Right cardiac atrium (tissue), 5 donors: ENCODE measurements at regions of chrX and their contacts with region 1.

Region 1: GRCh38 chrX:150352581-150352980 is 10.5 kb upstream of the MAMLD1 start:
- DNase-seq: no peak
- ATAC-seq: no peak
- H3K4me3 ChIP-seq: no peak overlapping the region
- H3K27ac ChIP-seq: no peak overlapping the region
- H3K4me1 ChIP-seq: no peaks in the 10 kb centered on the region
- H3K27me3 ChIP-seq: no peaks in the 10 kb centered on the region

Region 2: DNA sequence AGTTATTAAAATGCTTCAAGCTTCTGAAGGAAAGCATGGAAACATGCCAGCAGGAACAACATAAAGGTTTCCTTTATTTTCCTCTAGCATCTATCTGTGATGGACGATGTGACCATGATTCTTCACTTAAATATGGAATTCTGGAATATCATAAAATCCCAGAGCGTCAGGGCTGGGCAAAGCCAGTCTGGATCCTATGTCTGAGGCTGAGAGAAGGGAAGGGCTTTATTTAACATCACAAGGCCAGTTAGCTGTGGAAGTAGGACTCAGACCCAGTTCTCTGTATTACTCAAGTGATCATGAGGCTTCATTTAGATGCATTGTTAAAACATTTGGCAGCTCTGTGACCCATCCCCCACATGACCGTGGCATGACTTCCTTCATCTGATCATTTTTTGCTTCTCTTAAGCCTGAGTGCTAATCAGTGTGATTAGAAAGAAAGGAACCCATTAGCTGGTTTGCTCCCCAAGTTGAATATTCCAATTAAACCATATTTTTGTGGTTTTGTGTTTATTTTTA is 373.4 kb before region 1 on chrX:
- intact Hi-C with region 1: loop called in 1 of 4 experiments (anchors 10 kb)
- DNase-seq: no peak
- ATAC-seq: no peak
- H3K4me3 ChIP-seq: no peak overlapping the region
- H3K27ac ChIP-seq: no peak overlapping the region
- H3K4me1 ChIP-seq: peaks cover 5% of the 10 kb centered on the region
- H3K27me3 ChIP-seq: no peaks in the 10 kb centered on the region